ENCODE measurements at regions of chr3 and their contacts with region 1.

Region 1: GRCh38 chr3:156307704-156308103 is 187.3 kb downstream of the KCNAB1 start:
- DNase-seq: peak; percentile 26 to 90
- H3K4me3 ChIP-seq: no peak overlapping the region
- H3K27ac ChIP-seq: peak overlapping the region in 1 of 2 donors; percentile 5
- H3K4me1 ChIP-seq: peaks cover 0 to 33% of the 10 kb centered on the region in 2 donors
- H3K27me3 ChIP-seq: no peaks in the 10 kb centered on the region
- CTCF ChIP-seq: no peak

Region 2: DNA sequence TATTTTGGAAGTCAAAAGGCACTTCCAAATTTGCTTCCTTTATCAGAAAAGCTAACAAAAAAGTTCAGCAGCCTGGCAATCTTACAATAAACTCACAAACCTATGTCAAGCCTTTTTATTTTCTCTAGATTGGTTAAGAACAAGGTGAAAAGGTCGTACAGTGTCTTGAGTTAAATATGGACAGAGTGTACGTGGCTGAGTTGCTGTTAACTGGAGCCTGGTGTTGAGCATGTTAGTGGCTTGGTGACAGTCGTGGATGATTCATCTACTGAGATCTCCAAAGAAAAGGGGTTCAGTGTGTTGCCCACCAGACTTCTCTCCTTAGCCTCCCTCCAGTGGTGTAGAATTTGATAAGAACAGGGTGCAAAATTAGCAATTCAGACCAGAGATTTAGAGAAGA is 157.5 kb after region 1 on chr3:
- intact Hi-C with region 1: no loop called
- DNase-seq: no peak
- H3K4me3 ChIP-seq: peak overlapping the region in 1 of 2 donors; percentile 0
- H3K27ac ChIP-seq: peak overlapping the region; percentile 41 to 79
- H3K4me1 ChIP-seq: peaks cover 2 to 33% of the 10 kb centered on the region in 2 donors
- H3K27me3 ChIP-seq: no peaks in the 10 kb centered on the region
- CTCF ChIP-seq: no peak

Region 3: GRCh38 chr3:156492801-156493261 is 185.1 kb after region 1 on chr3:
- intact Hi-C with region 1: loop called (anchors 10 kb)
- DNase-seq: no peak
- H3K4me3 ChIP-seq: no peak overlapping the region
- H3K27ac ChIP-seq: peak overlapping the region; percentile 27 to 58
- H3K4me1 ChIP-seq: peaks cover 0 to 14% of the 10 kb centered on the region in 2 donors
- H3K27me3 ChIP-seq: no peaks in the 10 kb centered on the region
- CTCF ChIP-seq: no peak